Natural killer cell (primary cell): ENCODE measurements at regions of chr14 and their contacts with region 1.

Region 1: GRCh38 chr14:21476925-21477681 is at the starts of genes RAB2B and TOX4:
- DNase-seq: peak; percentile 92 to 99
- ATAC-seq: peak; percentile 94 to 100 (median 96)
- H3K4me3 ChIP-seq: peak within 1 kb of the TSS; percentile 80
- H3K4me3 Mint-ChIP-seq: peak within 1 kb of the TSS; percentile 98
- H3K27ac ChIP-seq: peak within 1 kb of the TSS; percentile 88
- H3K27ac Mint-ChIP-seq: peak within 1 kb of the TSS; percentile 96 to 97
- H3K4me1 ChIP-seq: peaks cover 9% of the 10 kb centered on the region
- H3K4me1 Mint-ChIP-seq: peaks cover 34 to 43% of the 10 kb centered on the region in 2 donors
- H3K27me3 ChIP-seq: no peaks in the 10 kb centered on the region
- H3K27me3 Mint-ChIP-seq: no peaks in the 10 kb centered on the region
- CTCF ChIP-seq: peak; percentile 88
- total RNA-seq, gene RAB2B: 43.3 to 64.7 (median 50.9) TPM
- total RNA-seq, gene TOX4: 103 to 123 (median 123) TPM

Region 2: DNA sequence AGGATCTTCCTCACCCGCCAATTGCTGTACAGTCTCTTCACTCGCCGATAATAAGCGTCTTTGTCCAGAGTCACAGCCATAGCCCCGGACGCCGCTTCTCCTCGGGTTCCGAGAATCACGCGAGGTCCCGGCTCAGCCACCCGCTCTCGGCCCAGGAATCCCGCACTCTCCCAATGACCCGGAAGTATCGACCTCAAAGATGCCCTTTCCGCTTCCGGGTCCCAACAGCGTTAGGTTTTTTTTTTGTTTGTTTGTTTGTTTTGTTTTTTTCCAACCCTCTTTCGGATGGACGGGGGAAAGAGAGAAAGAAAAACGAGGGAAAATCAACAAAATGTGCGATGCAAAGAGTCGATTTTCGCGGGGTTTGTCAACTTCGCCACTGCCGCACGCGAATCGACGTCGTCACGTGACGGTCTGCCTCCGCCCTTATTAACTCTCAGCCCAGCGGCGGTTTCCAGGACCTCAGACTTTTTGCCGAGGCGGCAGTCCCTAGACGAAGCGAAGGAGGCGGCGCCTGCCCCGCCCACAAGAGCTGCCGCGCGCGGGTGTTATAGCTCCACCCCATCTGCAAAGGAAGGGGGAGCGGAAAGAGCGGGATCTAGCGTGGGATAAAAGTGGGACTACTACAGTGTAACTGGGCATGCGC is 93.1 kb before region 1 on chr14 and contains the start of gene SUPT16H:
- intact Hi-C with region 1: loop called (anchors 1 kb)
- DNase-seq: peak; percentile 89 to 96
- ATAC-seq: peak; percentile 89 to 98 (median 93)
- H3K4me3 ChIP-seq: peak within 1 kb of the TSS; percentile 96
- H3K4me3 Mint-ChIP-seq: peak within 1 kb of the TSS; percentile 98
- H3K27ac ChIP-seq: peak within 1 kb of the TSS; percentile 93
- H3K27ac Mint-ChIP-seq: peak within 1 kb of the TSS; percentile 96 to 99
- H3K4me1 ChIP-seq: peaks cover 17% of the 10 kb centered on the region
- H3K4me1 Mint-ChIP-seq: peaks cover 33% of the 10 kb centered on the region in 2 donors
- H3K27me3 ChIP-seq: no peaks in the 10 kb centered on the region
- H3K27me3 Mint-ChIP-seq: no peaks in the 10 kb centered on the region
- CTCF ChIP-seq: no peak
- total RNA-seq, gene SUPT16H: 60.3 to 72.6 (median 65.1) TPM

Region 3: DNA sequence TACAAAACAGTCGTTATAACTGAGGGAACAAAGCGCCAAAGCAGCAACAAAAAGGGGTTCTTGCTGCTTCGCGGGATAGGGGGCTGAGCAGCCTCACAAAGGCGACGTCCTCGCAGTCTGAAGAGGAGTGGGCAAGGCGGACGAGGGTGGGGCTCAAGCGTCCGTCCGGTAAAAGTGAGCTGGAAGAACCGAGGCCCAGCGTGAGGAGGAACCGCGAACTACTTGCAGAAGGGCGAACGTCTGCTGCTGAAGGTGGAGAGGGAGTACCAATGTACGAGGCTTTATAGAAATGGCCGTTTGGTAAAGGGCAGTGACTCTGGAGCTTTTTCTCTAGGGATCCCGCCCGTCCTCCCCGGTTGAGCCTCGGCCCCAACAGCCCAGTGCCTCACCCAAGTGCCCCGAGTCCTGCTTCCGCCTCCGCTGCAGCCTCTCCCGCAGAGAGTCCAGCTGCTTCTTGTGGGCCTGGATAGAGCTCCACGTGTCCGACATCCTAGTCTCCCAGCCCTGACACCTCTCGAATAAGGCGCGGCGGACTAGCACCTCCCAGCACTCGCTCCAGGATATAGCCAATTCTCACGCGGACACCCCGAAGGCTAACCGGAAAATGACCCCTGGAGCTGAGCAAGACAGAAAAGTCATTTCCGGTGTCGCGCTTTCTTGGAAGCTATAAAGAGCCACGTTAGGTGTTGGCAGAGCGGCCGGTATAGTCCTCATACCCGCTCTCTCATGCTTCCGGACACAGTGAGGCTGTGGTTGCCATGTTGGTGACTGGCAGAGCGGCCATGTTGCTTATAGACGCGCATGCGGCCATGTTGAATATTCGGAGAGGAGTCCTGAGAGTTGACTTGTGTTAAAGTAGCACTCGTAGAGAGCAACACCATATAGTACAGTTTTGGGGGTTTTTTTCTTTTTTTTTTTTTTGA is 33.9 kb after region 1 on chr14 and contains the start of gene METTL3:
- intact Hi-C with region 1: loop called (anchors 1 kb)
- DNase-seq: peak; percentile 91 to 98
- ATAC-seq: peak; percentile 98 to 100 (median 99)
- H3K4me3 ChIP-seq: peak within 1 kb of the TSS; percentile 82
- H3K4me3 Mint-ChIP-seq: peak within 1 kb of the TSS; percentile 97
- H3K27ac ChIP-seq: peak within 1 kb of the TSS; percentile 73
- H3K27ac Mint-ChIP-seq: peak within 1 kb of the TSS; percentile 96 to 98
- H3K4me1 ChIP-seq: peaks cover 17% of the 10 kb centered on the region
- H3K4me1 Mint-ChIP-seq: peaks cover 35 to 40% of the 10 kb centered on the region in 2 donors
- H3K27me3 ChIP-seq: no peaks in the 10 kb centered on the region
- H3K27me3 Mint-ChIP-seq: no peaks in the 10 kb centered on the region
- CTCF ChIP-seq: no peak
- total RNA-seq, gene METTL3: 63.3 to 72.5 (median 68.3) TPM